OCI-LY7 (cell line): ENCODE measurements at regions of chr1 and their contacts with region 1.

Region 1: GRCh38 chr1:203267347-203267846 is 37.9 kb upstream of the BTG2 start:
- DNase-seq: peak; percentile 87
- H3K4me3 ChIP-seq: peak overlapping the region; percentile 33
- H3K27ac ChIP-seq: no peak overlapping the region
- H3K4me1 ChIP-seq: peaks cover 81% of the 10 kb centered on the region
- CTCF ChIP-seq: peak; percentile 98

Region 2: DNA sequence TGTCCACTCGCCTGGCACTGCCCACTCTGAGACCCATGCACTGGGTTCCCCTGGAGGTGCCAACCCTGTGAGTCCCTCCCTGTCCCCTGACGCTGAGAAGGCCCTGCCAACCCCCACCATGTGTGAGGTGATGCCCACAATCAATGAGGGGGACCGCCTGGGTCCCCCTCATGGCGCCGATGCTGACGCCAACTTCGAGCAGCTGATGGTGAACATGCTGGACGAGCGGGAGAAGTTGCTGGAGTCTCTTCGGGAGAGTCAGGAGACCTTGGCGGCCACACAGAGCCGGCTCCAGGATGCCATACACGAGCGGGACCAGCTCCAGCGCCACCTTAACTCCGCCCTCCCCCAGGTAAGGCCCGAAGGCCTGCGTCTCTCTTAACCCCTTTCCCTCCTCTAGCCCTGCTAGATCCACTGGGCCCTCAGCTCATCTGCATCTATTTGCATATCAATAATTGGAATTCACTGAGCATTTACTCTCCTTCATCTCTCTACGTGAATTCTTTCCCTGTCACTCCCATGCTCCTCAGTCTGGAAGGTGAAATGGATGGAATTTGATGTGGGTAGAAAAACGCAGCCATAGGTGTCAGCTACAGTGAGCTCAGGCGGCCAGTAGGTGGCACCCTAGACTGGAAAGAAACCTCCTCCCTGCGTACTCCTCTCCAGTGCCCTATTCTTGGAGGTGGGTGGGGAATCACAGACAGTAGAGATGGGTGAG is 228.3 kb before region 1 on chr1:
- CTCF ChIA-PET with region 1: no interaction called
- POLR2A ChIA-PET with region 1: no interaction called
- intact Hi-C with region 1: loop called (anchors 2 kb)
- DNase-seq: peak; percentile 67
- H3K4me3 ChIP-seq: no peak overlapping the region
- H3K27ac ChIP-seq: no peak overlapping the region
- H3K4me1 ChIP-seq: peaks cover 8% of the 10 kb centered on the region
- CTCF ChIP-seq: peak; percentile 98

Region 3: DNA sequence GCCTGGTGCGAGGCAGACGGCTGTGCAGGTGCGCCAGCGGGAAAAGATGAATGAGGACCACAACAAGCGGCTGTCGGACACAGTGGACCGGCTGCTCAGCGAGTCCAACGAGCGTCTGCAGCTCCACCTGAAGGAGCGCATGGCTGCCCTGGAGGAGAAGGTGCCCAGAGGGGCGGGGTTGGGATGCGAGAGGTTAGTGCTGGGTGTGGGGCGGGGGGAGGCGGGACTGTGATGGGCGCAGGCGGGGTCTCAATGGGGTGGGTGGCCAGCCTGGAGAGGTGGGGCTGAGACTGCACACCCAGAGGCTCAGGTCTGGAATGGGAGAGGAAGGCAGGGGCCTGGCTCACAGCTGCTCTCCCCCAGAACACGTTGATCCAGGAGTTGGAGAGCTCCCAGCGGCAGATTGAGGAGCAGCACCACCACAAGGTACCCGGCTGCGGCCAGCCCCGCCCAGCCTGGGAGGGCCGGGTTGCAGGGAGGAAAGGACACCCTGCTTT is 218.8 kb before region 1 on chr1:
- CTCF ChIA-PET with region 1: interaction called, 12 read pairs
- POLR2A ChIA-PET with region 1: no interaction called
- intact Hi-C with region 1: no loop called
- DNase-seq: no peak
- H3K4me3 ChIP-seq: no peak overlapping the region
- H3K27ac ChIP-seq: no peak overlapping the region
- H3K4me1 ChIP-seq: no peaks in the 10 kb centered on the region
- CTCF ChIP-seq: 0 out of 2 replicates have a peak, but pooled peaks have one; percentile 31

Region 4: DNA sequence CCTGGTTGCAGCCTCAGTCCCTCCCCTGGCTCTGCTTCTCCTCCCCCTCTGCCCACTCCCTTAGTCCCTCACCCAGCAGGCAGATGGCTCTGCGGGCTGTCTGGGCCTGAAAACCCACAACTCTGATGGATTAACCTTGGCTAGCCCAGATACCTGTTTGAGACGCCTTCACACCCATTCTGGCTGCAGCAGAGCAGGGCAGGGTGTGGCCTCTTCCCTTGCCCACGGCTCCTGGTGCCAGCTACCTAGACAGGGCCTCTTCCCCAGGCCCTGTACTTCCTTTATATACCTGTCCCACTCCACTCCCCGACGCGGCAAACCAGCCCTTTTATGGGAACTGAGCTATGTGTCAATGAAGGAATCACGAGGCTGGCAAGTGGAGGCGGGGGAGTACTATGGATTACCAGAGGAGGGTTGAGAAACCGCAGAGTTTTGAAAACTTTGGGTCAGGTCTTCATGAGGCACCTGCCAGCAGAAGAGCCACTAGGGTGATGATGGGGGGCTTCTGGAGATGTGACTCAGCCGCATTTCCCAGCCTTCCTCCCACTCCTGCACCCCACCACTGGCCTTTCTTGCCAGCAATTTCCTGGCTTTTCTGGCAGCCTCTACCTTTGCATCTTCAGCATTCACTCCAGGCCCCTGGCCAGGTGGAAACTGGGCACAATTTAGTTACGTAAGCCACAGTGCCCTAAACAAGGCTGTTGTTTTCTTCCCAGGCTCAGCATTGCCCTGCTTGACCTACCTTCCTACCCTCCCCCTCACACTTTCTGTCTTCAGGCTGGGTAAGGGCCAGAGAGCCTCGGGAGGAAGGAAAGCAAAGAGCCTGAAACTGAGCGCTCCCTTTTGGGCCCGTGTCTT is 80.7 kb before region 1 on chr1 and contains the start of gene CHI3L1:
- CTCF ChIA-PET with region 1: no interaction called
- POLR2A ChIA-PET with region 1: no interaction called
- intact Hi-C with region 1: no loop called
- DNase-seq: no peak
- H3K4me3 ChIP-seq: no peak within 1 kb of the TSS
- H3K27ac ChIP-seq: no peak within 1 kb of the TSS
- H3K4me1 ChIP-seq: no peaks in the 10 kb centered on the region
- CTCF ChIP-seq: no peak
- total RNA-seq, gene CHI3L1: not detected in 2 replicates

Region 5: DNA sequence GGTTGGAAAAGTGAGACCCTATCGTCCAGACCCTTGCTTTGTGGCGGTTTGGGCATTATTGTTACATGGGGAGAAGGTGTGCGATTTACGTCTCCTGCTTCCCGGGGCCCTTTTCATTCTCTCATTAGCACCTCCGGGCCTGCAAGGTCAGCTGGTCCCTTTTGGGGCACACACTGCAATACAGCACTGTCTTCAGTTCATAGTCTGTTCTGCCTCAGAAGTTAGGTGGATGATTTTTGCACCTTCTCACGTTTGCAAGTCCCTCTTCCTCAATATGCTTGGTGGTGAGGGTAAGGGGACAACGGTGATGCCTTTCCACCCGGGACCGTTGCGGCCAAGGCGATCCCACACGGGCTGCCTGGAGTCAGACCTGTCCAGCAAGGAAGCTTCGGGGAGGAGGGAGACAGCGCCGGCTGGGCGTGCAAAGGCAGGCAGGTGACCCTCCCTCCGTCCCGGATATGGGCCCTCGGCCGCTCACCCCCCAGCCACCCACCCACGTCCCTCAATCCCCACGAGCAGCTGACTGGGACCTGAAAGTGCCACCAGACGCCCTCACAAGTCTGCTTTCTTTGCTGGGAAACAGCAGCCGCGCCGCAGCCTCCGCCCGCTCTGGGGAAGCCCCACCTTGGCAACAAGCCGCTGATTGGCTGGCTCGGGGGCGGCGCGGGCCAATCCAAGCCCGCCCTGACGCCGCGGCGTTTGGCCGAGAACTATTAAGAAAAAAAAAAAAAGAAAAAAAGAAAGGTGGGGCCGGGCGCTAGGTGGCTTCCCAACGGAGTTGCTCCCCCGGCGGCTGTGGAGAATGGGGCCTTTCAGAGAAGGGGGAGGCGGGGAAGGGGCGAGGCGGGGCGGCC is 59.7 kb after region 1 on chr1:
- CTCF ChIA-PET with region 1: interaction called, 7 read pairs
- POLR2A ChIA-PET with region 1: interaction called, 26 read pairs
- intact Hi-C with region 1: no loop called
- DNase-seq: peak; percentile 96
- H3K4me3 ChIP-seq: peak overlapping the region; percentile 67
- H3K27ac ChIP-seq: peak overlapping the region; percentile 98
- H3K4me1 ChIP-seq: peaks cover 90% of the 10 kb centered on the region
- CTCF ChIP-seq: no peak

Region 6: GRCh38 chr1:203440771-203441170 is 173.4 kb after region 1 on chr1:
- CTCF ChIA-PET with region 1: no interaction called
- POLR2A ChIA-PET with region 1: interaction called, 3 read pairs
- intact Hi-C with region 1: loop called (anchors 1 kb)
- DNase-seq: peak; percentile 65
- H3K4me3 ChIP-seq: no peak overlapping the region
- H3K27ac ChIP-seq: no peak overlapping the region
- H3K4me1 ChIP-seq: no peaks in the 10 kb centered on the region
- CTCF ChIP-seq: peak; percentile 63

Region 7: GRCh38 chr1:203486618-203487370 is 219.4 kb after region 1 on chr1:
- CTCF ChIA-PET with region 1: interaction called, 4 read pairs
- POLR2A ChIA-PET with region 1: interaction called, 3 read pairs
- intact Hi-C with region 1: loop called (anchors 1 kb)
- DNase-seq: no peak
- H3K4me3 ChIP-seq: peak overlapping the region; percentile 65
- H3K27ac ChIP-seq: no peak overlapping the region
- H3K4me1 ChIP-seq: peaks cover 11% of the 10 kb centered on the region
- CTCF ChIP-seq: no peak

Region 8: DNA sequence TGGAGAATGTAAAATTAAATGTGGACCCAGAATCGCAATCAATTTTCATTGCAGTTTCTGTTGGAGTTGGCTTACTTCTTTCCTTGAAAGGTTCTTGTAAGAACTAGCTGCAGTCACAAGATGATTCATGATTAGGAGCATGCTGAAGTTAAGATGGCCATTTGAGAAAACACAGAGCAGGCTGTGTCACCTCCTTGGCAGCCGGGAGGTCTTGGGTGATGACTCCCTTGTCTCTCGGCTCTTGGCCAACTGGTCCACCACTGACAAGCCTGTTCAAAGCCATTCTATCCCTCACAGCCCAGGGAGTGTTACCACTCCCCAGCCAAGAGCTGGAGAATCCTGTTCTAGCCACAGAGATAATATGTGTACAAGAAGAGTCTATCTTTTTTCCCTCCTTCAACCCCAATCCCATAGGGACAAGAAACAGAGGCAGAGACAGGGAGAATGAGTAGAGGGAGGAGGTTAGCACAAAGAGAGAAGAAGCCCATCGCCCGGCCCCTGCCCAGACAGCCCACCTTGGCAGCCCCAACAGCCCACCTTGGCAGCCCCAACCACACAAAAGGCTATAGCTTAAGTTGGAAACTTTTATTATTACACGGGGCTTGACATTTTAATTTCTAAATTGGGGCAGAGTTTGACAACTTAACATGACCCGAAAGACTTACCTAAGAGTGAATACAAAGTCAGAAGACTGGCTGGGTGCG is 267.3 kb after region 1 on chr1:
- CTCF ChIA-PET with region 1: no interaction called
- POLR2A ChIA-PET with region 1: no interaction called
- intact Hi-C with region 1: no loop called
- DNase-seq: no peak
- H3K4me3 ChIP-seq: no peak overlapping the region
- H3K27ac ChIP-seq: no peak overlapping the region
- H3K4me1 ChIP-seq: no peaks in the 10 kb centered on the region
- CTCF ChIP-seq: no peak